Posterior cingulate gyrus (tissue), 11 donors: ENCODE measurements at regions of chr1 and their contacts with region 1.

Region 1: GRCh38 chr1:17125756-17126237 is 6.5 kb upstream of the PADI2 start:
- DNase-seq: peak; percentile 70 to 98 (median 92)

Region 2: DNA sequence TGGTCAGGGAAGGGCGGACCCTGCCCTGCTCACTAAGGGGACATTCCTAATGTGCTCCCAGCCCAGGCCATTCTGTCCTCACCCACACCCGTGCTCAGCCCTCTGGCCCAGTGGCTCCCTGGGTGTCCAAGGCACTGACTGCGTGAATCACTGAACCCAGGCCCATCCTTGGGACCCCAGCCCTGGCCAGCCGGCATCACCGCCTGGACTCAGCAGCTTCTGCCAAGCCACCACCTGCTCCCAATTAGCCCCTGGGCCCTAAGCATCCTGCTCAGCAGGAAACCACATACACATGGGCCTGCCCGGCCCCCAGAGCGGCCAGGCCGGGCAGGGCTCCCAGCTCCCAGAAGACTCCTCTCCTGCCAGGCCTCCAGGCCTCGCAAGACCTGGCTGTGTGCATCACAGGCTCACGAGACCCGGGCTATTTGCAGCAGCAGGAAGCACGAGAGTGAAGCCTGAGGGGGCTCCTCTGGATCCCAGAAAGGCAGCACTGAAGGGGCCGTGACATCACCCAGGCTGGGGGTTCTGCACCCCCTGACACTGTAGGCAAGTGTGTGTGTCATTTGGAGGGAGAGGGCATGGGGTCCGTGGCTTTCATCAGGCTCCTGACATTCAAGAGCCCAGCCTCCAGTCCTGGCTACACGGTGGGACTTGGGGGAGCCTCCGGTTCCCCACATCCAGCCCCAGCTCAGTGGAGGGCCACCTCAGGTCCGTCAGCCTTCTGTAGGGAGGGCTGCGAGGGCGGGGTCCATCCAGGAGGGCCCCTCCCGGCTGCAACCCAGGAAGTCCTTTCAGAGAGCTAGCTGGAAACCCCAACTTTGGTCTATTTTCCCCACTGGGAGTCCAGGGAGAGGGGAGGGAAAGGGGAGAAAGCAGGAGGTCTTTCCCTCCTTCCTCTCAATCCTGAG is 147.0 kb before region 1 on chr1:
- intact Hi-C with region 1: no loop called
- DNase-seq: peak in 1 of 10 donors; percentile 83

Region 3: DNA sequence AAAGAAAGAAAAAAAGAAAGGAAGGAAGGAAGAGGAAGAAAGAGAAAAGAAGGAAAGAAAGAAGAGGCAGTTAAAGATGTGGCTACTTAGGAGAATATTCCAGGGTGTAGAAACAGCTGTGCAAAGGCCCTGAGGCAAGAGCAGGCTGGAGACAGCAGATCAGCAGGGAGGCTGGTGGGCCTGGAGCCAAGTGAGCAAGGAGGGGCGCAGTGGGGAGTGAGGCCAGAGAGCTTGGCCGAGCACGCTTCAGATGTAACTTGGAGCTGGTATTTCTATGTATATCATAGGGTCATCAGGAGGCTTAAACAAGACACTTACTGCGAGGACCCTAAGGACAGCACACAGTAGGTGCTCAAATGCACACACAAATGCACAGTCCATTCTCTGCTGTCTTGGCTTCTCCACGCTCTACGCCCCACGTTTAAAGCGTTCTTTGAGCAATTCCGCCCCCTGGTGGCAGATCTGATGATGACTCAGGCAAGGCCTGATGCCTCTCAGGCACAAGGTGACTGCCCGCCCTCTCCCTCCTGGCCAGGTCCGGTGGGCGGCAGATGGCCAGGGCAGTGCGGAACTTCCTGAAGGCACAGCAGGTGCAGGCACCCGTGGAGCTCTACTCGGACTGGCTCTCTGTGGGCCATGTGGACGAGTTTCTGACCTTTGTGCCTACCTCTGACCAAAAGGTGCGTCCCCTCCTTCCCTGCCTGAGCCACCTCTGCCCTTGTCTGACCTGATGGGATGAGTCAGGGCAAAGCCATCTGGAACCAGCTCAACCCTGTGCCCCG is 111.2 kb after region 1 on chr1:
- intact Hi-C with region 1: loop called (anchors 1 kb)
- DNase-seq: peak; percentile 70 to 97 (median 92)

Region 4: DNA sequence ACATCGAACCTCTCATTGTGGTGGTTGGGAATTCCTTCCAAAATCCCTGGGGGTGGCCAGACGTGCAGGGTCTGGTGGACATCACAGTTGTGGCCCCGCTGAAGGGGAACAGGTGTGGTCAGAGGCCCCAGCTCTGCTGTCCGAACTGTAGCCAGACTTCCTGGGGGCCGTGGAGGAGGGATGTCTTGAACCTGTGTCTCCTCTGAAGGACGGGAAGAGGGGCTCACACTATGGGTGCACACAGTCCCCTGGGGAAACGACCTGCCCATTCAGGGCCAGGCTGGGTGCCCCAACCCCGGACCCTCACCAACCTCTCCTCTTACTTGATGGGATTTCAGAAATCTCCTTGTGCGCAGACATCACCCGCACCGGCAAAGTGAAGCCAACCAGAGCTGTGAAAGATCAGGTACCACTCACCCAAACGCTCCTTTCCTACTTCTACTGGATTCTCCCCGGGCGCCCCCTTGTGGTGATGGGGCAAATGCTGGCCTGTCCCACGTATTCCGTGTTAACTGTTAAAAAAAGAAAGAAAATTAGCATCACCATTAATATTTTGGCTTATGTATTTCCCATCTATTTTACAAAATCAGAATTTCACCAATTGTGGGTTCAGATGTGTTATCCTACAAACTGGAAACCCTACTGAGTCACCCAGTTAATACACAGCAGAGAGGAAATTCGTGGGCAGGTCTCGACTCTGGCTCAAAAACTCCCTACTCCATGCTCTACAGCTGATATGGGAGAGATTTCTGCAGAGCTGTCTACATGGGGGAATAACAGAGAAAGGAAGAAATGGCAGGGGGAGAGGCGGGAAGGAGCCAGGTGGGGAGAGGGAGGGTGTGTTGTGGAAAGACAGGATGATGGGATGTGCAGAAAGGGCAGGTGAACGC is 210.3 kb after region 1 on chr1:
- intact Hi-C with region 1: loop called (anchors 2 kb)
- DNase-seq: peak in 9 of 10 donors; percentile 18 to 89 (median 67)

Region 5: DNA sequence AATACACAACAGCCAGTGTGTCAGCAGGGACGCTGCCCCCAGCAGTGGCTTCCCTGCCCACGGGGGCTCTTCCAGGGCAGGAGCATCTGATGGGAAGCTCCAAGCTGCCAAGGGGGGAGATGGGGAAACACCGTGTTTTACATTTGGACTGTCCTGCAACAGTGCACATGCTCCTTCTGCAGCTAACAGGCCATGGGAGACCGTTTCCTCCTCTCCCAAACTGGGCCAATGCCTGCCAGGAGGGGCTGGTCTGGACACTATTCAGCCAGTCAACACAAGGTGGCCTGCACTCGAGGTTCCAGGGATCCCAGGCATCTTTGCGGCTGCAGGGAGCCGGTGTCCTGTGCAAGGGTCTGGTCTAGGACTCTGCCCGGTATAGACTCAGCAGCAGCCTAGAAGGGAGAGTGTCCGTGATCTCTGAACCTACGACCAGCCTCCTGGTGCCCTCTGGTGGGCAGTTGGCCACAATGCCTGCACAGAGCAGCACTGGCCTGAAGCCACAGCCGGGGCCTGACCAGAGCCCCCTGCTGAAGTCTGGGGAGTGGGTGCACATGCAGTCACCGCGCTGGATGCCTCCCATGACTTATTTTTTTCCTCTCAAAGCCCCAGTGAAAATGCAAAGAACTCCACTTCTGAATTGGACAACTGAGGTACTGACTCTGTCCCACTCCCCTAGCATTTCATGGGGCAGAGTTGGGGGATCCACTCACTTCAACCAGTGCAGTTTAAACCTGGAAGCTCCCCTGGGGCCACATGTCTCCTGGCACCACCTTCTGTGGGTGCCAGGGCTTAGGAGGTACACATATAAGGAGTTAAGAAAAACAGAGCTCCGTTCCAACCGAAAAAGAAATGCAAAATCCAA is 280.3 kb after region 1 on chr1:
- intact Hi-C with region 1: loop called (anchors 2 kb)
- DNase-seq: peak; percentile 29 to 94 (median 66)